ENCODE measurements at regions of chr14 and their contacts with region 1.

Region 1: DNA sequence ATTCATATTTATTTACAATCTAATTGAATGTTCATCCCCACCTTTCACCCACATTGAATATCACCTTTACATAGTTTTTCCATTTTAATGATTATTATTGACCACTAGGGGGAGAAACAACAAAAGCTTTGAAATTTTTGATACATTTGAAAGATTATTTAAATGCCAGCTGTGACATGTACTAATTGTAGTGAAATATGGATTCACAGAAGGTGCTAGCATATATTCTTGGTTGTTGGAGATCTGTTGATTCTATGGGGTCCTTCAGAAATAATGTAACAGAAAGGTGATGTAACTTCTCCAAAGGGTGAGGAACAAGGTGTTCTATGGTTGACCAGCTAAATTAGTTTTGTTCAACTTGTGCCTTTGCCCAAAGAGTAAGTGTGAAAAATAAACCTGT is 22.4 kb upstream of the GPR33 start:
- DNase-seq: peak; percentile 43
- H3K4me3 Mint-ChIP-seq: no peak overlapping the region
- H3K27ac Mint-ChIP-seq: no peak overlapping the region
- H3K4me1 Mint-ChIP-seq: peaks cover 8% of the 10 kb centered on the region
- H3K27me3 Mint-ChIP-seq: no peaks in the 10 kb centered on the region
- CTCF ChIP-seq: peak; percentile 44

Region 2: DNA sequence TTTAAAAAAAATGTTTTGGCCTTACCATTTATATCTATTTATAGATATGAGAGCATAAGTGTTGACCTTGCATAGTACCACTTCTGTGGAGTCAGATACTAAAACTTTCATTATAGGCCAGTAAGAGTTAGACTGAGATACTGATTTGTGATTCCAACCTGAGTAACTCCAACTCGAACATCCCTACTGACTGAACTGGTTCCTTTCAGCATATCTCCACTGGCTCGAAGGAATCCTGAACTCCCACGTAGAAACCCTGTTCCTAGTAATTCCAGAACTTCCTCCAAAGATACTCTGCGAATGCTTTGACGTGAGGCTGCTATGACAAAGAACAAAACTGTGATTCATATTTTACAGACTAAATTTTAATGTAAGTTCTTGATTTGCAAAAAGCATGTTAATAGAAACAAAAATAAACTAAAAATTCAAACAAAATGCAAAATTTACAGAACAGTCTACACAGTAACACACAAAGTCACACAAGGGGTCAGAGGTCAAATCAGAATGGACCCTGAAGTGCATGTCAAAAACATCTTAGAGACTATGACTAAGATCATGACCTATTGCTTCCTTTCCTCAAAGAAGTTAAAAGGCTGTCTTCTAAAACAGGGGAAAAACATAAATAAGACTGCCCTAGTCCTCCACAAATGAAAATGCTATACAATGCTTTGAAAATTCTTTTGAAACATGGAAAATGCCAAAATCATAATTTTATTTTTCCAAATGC is 121.4 kb before region 1 on chr14:
- CTCF ChIA-PET with region 1: no interaction called
- POLR2A ChIA-PET with region 1: no interaction called
- intact Hi-C with region 1: no loop called
- DNase-seq: no peak
- H3K4me3 Mint-ChIP-seq: no peak overlapping the region
- H3K27ac Mint-ChIP-seq: no peak overlapping the region
- H3K4me1 Mint-ChIP-seq: no peaks in the 10 kb centered on the region
- H3K27me3 Mint-ChIP-seq: no peaks in the 10 kb centered on the region
- CTCF ChIP-seq: no peak

Region 3: GRCh38 chr14:31476131-31476866 is 33.9 kb before region 1 on chr14:
- CTCF ChIA-PET with region 1: no interaction called
- POLR2A ChIA-PET with region 1: no interaction called
- intact Hi-C with region 1: no loop called
- DNase-seq: no peak
- H3K4me3 Mint-ChIP-seq: no peak overlapping the region
- H3K27ac Mint-ChIP-seq: no peak overlapping the region
- H3K4me1 Mint-ChIP-seq: no peaks in the 10 kb centered on the region
- H3K27me3 Mint-ChIP-seq: no peaks in the 10 kb centered on the region
- CTCF ChIP-seq: no peak

Region 4: GRCh38 chr14:31543969-31544799 is 34.0 kb after region 1 on chr14:
- CTCF ChIA-PET with region 1: no interaction called
- POLR2A ChIA-PET with region 1: no interaction called
- intact Hi-C with region 1: no loop called
- DNase-seq: no peak
- H3K4me3 Mint-ChIP-seq: no peak overlapping the region
- H3K27ac Mint-ChIP-seq: no peak overlapping the region
- H3K4me1 Mint-ChIP-seq: peaks cover 10% of the 10 kb centered on the region
- H3K27me3 Mint-ChIP-seq: no peaks in the 10 kb centered on the region
- CTCF ChIP-seq: no peak

Region 5: DNA sequence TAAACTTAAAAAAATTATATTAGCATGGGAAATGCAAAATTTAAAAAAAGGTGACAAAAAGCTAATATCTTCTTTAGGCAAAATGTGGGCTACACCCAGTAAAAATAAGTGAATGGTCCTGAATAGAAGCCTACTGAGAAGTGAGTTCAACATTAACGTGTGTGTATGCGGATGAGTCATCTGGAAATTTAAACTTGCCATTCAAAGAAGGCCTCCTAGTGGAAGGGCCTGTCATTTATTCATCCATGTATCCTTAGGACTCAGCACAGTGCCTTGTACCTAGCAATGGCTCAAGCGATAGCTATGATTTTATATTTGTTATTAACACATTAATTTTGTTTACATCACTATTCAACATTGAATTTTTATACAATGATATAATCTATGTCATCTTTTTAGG is 277.2 kb after region 1 on chr14:
- CTCF ChIA-PET with region 1: no interaction called
- POLR2A ChIA-PET with region 1: no interaction called
- intact Hi-C with region 1: loop called (anchors 1 kb)
- DNase-seq: peak; percentile 38
- H3K4me3 Mint-ChIP-seq: no peak overlapping the region
- H3K27ac Mint-ChIP-seq: no peak overlapping the region
- H3K4me1 Mint-ChIP-seq: no peaks in the 10 kb centered on the region
- H3K27me3 Mint-ChIP-seq: no peaks in the 10 kb centered on the region
- CTCF ChIP-seq: peak; percentile 15

Region 6: DNA sequence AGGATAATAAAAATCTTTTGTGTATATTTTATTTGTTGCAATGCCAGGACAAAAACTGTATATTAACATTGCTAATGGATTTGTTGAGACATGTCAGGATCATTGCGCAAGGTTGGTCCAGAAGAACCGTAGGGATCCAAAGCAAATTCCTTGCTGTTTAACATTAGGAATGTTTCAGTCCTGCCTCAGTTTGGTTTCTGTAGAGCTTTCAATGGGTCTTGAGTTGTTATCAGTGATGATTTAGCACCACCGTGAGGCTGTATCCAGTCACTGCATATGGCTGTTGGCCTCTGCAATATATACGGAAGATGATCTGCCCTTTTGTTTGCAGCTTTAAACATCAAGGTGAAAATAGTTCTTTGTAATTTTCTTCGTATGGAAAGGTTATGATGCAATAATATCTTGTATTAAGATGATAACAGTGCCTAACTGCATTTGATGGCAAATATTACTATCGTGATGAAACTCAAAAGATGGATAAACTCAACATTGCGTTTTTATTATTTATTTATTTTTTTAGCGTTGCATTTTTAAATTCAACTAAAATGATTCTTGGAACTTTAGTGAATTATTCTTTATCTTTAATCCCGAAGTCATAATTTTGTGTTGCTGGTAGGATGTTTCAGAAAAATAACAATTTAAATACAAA is 1050.1 kb after region 1 on chr14:
- CTCF ChIA-PET with region 1: no interaction called
- POLR2A ChIA-PET with region 1: interaction called, 4 read pairs
- intact Hi-C with region 1: loop called (anchors 5 kb)
- DNase-seq: peak; percentile 85
- H3K4me3 Mint-ChIP-seq: no peak overlapping the region
- H3K27ac Mint-ChIP-seq: no peak overlapping the region
- H3K4me1 Mint-ChIP-seq: peaks cover 10% of the 10 kb centered on the region
- H3K27me3 Mint-ChIP-seq: no peaks in the 10 kb centered on the region
- CTCF ChIP-seq: peak; percentile 77